ENCODE measurements at regions of chr10 and their contacts with region 1.

Region 1: GRCh38 chr10:73159038-73159648 is 8.7 kb downstream of the ECD start:
- DNase-seq: peak; percentile 25 to 69 (median 50)
- H3K4me3 ChIP-seq: no peak overlapping the region
- H3K4me3 Mint-ChIP-seq: no peak overlapping the region
- H3K27ac ChIP-seq: no peak overlapping the region
- H3K27ac Mint-ChIP-seq: peak overlapping the region in 4 of 8 donors; percentile 33 to 81 (median 70)
- H3K4me1 ChIP-seq: peaks cover 13% of the 10 kb centered on the region
- H3K4me1 Mint-ChIP-seq: peaks cover 35 to 43% (median 38%) of the 10 kb centered on the region in 3 donors
- H3K27me3 ChIP-seq: no peaks in the 10 kb centered on the region
- H3K27me3 Mint-ChIP-seq: no peaks in the 10 kb centered on the region

Region 2: GRCh38 chr10:73110345-73110849 is 48.7 kb before region 1 on chr10 and contains the start of gene NUDT13:
- CTCF ChIA-PET with region 1: interaction called, 10 read pairs
- POLR2A ChIA-PET with region 1: no interaction called
- DNase-seq: peak in 4 of 5 donors; percentile 8 to 56 (median 38)
- H3K4me3 ChIP-seq: peak within 1 kb of the TSS; percentile 52
- H3K4me3 Mint-ChIP-seq: peak within 1 kb of the TSS; percentile 87 to 95 (median 91)
- H3K27ac ChIP-seq: peak within 1 kb of the TSS; percentile 73
- H3K27ac Mint-ChIP-seq: peak within 1 kb of the TSS; percentile 58 to 93 (median 89)
- H3K4me1 ChIP-seq: no peaks in the 10 kb centered on the region
- H3K4me1 Mint-ChIP-seq: peaks cover 8 to 15% (median 14%) of the 10 kb centered on the region in 3 donors
- H3K27me3 ChIP-seq: no peaks in the 10 kb centered on the region
- H3K27me3 Mint-ChIP-seq: no peaks in the 10 kb centered on the region
- total RNA-seq, gene NUDT13: 1.7 TPM

Region 3: GRCh38 chr10:73141603-73142002 is 17.5 kb before region 1 on chr10:
- CTCF ChIA-PET with region 1: interaction called, 16 read pairs
- POLR2A ChIA-PET with region 1: no interaction called
- DNase-seq: no peak
- H3K4me3 ChIP-seq: no peak overlapping the region
- H3K4me3 Mint-ChIP-seq: no peak overlapping the region
- H3K27ac ChIP-seq: no peak overlapping the region
- H3K27ac Mint-ChIP-seq: peak overlapping the region in 2 of 8 donors; percentile 50 to 57
- H3K4me1 ChIP-seq: no peaks in the 10 kb centered on the region
- H3K4me1 Mint-ChIP-seq: no peaks in the 10 kb centered on the region
- H3K27me3 ChIP-seq: no peaks in the 10 kb centered on the region
- H3K27me3 Mint-ChIP-seq: no peaks in the 10 kb centered on the region

Measured in CD8-positive, alpha-beta memory T cell (primary cell).